PC-9 (cell line): ENCODE measurements at regions of chr12 and their contacts with region 1.

Region 1: GRCh38 chr12:77521508-77522115 is 309.1 kb upstream of the NAV3 start:
- DNase-seq: no peak
- H3K4me3 ChIP-seq: no peak overlapping the region
- H3K27ac ChIP-seq: no peak overlapping the region
- H3K4me1 ChIP-seq: no peaks in the 10 kb centered on the region
- H3K27me3 ChIP-seq: no peaks in the 10 kb centered on the region
- CTCF ChIP-seq: no peak

Region 2: GRCh38 chr12:77842430-77842829 is 320.8 kb after region 1 on chr12:
- CTCF ChIA-PET with region 1: interaction called, 11 read pairs
- POLR2A ChIA-PET with region 1: no interaction called
- intact Hi-C with region 1: no loop called
- DNase-seq: peak in 1 of 2 experiments; percentile 14
- H3K4me3 ChIP-seq: no peak overlapping the region
- H3K27ac ChIP-seq: no peak overlapping the region
- H3K4me1 ChIP-seq: peaks cover 34% of the 10 kb centered on the region
- H3K27me3 ChIP-seq: no peaks in the 10 kb centered on the region
- CTCF ChIP-seq: no peak